GM13977 (cell line): ENCODE measurements at regions of chr1 and their contacts with region 1.

Region 1: DNA sequence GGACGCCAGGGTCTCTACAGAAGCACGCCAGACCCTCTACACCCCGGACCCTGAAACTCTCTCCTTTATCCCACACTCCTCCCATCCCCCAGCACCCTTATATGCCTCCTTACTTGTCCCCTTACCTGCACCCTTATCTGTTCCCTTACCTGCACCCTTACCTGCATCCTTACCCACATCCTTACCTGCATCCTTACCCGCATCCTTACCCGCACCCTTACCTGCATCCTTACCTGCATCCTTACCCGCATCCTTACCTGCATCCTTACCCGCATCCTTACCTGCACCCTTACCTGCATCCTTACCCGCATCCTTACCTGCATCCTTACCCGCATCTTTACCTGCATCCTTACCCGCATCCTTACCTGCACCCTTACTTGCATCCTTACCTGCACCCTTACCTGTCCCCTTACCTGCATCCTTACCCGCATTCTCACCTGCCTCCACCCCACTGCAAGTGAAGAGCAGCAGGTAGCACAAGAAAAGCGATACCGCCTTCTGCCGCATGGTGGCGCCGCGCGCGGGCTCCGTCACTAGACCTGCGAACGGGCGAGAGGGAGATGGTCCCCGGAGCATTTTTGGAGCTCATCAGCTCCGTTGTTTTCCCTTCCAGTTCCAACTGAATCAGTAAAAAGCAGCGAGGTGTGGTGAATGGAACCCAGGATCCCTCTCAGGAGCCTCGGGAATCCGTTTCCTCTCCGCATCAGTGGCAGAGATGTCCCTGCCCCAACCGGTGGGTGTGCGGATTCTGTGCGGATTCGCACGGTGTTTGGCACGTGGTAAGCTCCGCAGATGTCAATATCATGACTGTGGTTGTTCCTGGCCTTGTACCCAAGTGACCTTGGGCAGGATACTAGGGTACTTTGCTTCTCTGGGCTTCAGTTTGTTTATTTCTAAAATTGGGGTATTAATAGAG is 2.9 kb downstream of the IFI6 start:
- DNase-seq: peak; percentile 84
- CTCF ChIP-seq: peak; percentile 94

Region 2: GRCh38 chr1:27605796-27606707 is 63.0 kb before region 1 on chr1:
- in situ Hi-C with region 1: loop called (anchors 5 kb)
- DNase-seq: peak; percentile 73
- CTCF ChIP-seq: peak; percentile 90

Region 3: GRCh38 chr1:28056129-28056925 is 387.3 kb after region 1 on chr1:
- in situ Hi-C with region 1: no loop called
- DNase-seq: peak; percentile 21
- CTCF ChIP-seq: no peak